ENCODE measurements at regions of chr3 and their contacts with region 1.

Region 1: DNA sequence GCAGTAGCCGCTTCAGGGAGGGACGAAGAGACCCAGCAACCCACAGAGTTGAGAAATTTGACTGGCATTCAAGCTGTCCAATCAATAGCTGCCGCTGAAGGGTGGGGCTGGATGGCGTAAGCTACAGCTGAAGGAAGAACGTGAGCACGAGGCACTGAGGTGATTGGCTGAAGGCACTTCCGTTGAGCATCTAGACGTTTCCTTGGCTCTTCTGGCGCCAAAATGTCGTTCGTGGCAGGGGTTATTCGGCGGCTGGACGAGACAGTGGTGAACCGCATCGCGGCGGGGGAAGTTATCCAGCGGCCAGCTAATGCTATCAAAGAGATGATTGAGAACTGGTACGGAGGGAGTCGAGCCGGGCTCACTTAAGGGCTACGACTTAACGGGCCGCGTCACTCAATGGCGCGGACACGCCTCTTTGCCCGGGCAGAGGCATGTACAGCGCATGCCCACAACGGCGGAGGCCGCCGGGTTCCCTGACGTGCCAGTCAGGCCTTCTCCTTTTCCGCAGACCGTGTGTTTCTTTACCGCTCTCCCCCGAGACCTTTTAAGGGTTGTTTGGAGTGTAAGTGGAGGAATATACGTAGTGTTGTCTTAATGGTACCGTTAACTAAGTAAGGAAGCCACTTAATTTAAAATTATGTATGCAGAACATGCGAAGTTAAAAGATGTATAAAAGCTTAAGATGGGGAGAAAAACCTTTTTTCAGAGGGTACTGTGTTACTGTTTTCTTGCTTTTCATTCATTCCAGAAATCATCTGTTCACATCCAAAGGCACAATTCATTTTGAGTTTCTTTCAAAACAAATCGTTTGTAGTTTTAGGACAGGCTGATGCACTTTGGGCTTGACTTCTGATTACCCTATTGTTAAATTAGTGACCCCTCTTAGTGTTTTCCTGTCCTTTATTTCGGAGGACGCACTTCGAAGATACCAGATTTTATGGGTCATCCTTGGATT is at the start of gene MLH1:
- DNase-seq: peak; percentile 89
- H3K4me3 Mint-ChIP-seq: no peak within 1 kb of the TSS
- H3K27ac Mint-ChIP-seq: no peak within 1 kb of the TSS
- H3K4me1 Mint-ChIP-seq: no peaks in the 10 kb centered on the region
- H3K27me3 Mint-ChIP-seq: no peaks in the 10 kb centered on the region
- CTCF ChIP-seq: no peak
- total RNA-seq, gene MLH1: 57.0 and 65.0 TPM in 2 replicates

Region 2: GRCh38 chr3:36562945-36563344 is 430.7 kb before region 1 on chr3:
- CTCF ChIA-PET with region 1: no interaction called
- POLR2A ChIA-PET with region 1: no interaction called
- intact Hi-C with region 1: no loop called
- DNase-seq: no peak
- H3K4me3 Mint-ChIP-seq: no peak overlapping the region
- H3K27ac Mint-ChIP-seq: no peak overlapping the region
- H3K4me1 Mint-ChIP-seq: no peaks in the 10 kb centered on the region
- H3K27me3 Mint-ChIP-seq: no peaks in the 10 kb centered on the region
- CTCF ChIP-seq: no peak

Region 3: GRCh38 chr3:36904641-36905040 is 89.0 kb before region 1 on chr3:
- CTCF ChIA-PET with region 1: interaction called, 11 read pairs
- POLR2A ChIA-PET with region 1: interaction called, 25 read pairs
- intact Hi-C with region 1: no loop called
- DNase-seq: peak; percentile 24
- H3K4me3 Mint-ChIP-seq: no peak overlapping the region
- H3K27ac Mint-ChIP-seq: no peak overlapping the region
- H3K4me1 Mint-ChIP-seq: peaks cover 21% of the 10 kb centered on the region
- H3K27me3 Mint-ChIP-seq: no peaks in the 10 kb centered on the region
- CTCF ChIP-seq: peak; percentile 55

Region 4: GRCh38 chr3:36969540-36970432 is 23.8 kb before region 1 on chr3:
- CTCF ChIA-PET with region 1: interaction called, 3 read pairs
- POLR2A ChIA-PET with region 1: interaction called, 13 read pairs
- intact Hi-C with region 1: no loop called
- DNase-seq: peak; percentile 59
- H3K4me3 Mint-ChIP-seq: no peak overlapping the region
- H3K27ac Mint-ChIP-seq: peak overlapping the region; percentile 70
- H3K4me1 Mint-ChIP-seq: peaks cover 13% of the 10 kb centered on the region
- H3K27me3 Mint-ChIP-seq: no peaks in the 10 kb centered on the region
- CTCF ChIP-seq: no peak

Region 5: GRCh38 chr3:37024092-37024491 is 30.5 kb after region 1 on chr3:
- CTCF ChIA-PET with region 1: no interaction called
- POLR2A ChIA-PET with region 1: no interaction called
- intact Hi-C with region 1: no loop called
- DNase-seq: peak; percentile 8
- H3K4me3 Mint-ChIP-seq: no peak overlapping the region
- H3K27ac Mint-ChIP-seq: no peak overlapping the region
- H3K4me1 Mint-ChIP-seq: no peaks in the 10 kb centered on the region
- H3K27me3 Mint-ChIP-seq: no peaks in the 10 kb centered on the region
- CTCF ChIP-seq: peak; percentile 19

Region 6: DNA sequence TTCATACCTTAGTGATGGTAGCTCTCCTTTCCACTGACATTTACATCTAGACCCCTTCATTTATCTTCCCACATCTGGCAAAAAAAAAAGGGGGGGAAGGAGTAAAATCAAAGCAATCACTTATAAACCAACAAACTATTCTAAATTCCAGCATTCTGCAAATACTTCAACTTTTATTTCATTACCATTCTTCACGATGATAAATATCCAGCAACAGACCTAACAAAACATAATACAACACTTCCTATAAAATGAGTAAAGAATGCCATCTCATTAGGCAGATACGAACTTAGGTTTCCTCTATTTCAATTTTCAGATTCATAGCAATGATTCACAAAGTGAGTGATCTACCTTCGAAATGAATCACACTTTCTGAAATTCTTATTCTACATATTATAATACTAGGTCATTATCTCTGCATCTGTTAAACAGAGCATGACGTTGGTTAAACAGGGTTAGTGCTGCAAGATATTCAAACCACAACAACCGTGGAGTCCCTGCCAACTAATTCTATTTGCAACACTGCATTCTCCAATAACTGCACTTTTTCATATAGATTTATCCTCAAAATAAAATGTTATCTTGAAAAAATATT is 181.0 kb after region 1 on chr3 and contains the start of gene LRRFIP2:
- CTCF ChIA-PET with region 1: no interaction called
- POLR2A ChIA-PET with region 1: interaction called, 3 read pairs
- intact Hi-C with region 1: loop called (anchors 1 kb)
- DNase-seq: peak; percentile 49
- H3K4me3 Mint-ChIP-seq: peak within 1 kb of the TSS; percentile 71
- H3K27ac Mint-ChIP-seq: peak within 1 kb of the TSS; percentile 65
- H3K4me1 Mint-ChIP-seq: peaks cover 31% of the 10 kb centered on the region
- H3K27me3 Mint-ChIP-seq: no peaks in the 10 kb centered on the region
- CTCF ChIP-seq: no peak
- total RNA-seq, gene LRRFIP2: 76.6 and 92.2 TPM in 2 replicates

Region 7: GRCh38 chr3:37210230-37210629 is 216.6 kb after region 1 on chr3:
- CTCF ChIA-PET with region 1: interaction called, 10 read pairs
- POLR2A ChIA-PET with region 1: interaction called, 4 read pairs
- intact Hi-C with region 1: loop called (anchors 1 kb)
- DNase-seq: no peak
- H3K4me3 Mint-ChIP-seq: no peak overlapping the region
- H3K27ac Mint-ChIP-seq: no peak overlapping the region
- H3K4me1 Mint-ChIP-seq: no peaks in the 10 kb centered on the region
- H3K27me3 Mint-ChIP-seq: no peaks in the 10 kb centered on the region
- CTCF ChIP-seq: no peak

Measured in MCF 10A (cell line).